ENCODE measurements at regions of chr12 and their contacts with region 1.

Region 1: DNA sequence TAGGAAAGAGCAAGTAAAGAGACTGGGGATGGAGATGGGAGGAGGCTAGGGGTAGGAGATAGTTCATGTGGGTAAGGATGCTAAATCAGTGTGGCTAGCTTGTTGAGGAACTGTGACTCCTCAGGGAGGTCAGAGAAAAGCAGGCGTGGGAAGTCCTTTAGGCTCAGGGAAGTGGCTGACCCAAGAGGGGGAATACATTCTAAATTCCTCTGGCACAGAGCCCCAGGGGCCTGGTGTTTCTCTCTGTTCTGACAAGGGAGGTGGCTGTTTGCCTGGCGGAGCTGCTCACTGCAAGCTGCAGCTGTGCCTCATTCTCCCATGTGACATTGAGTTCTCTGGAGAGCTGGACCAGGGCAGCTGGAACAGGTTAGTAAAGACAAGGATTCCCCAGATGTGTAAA is 152.2 kb upstream of the SLC38A2 start:
- DNase-seq: peak; percentile 28 to 85
- H3K4me3 ChIP-seq: no peak overlapping the region
- H3K27ac ChIP-seq: peak overlapping the region; percentile 56 to 58
- H3K4me1 ChIP-seq: peaks cover 0 to 11% of the 10 kb centered on the region in 2 donors
- H3K27me3 ChIP-seq: no peaks in the 10 kb centered on the region
- CTCF ChIP-seq: no peak

Region 2: GRCh38 chr12:46357438-46358324 is 167.1 kb before region 1 on chr12:
- intact Hi-C with region 1: no loop called
- DNase-seq: no peak
- H3K4me3 ChIP-seq: no peak overlapping the region
- H3K27ac ChIP-seq: peak overlapping the region in 1 of 2 donors; percentile 40
- H3K4me1 ChIP-seq: peaks cover 0 to 9% of the 10 kb centered on the region in 2 donors
- H3K27me3 ChIP-seq: no peaks in the 10 kb centered on the region
- CTCF ChIP-seq: no peak

Region 3: GRCh38 chr12:46546634-46547286 is 22.0 kb after region 1 on chr12:
- intact Hi-C with region 1: loop called (anchors 1 kb)
- DNase-seq: no peak
- H3K4me3 ChIP-seq: no peak overlapping the region
- H3K27ac ChIP-seq: no peak overlapping the region
- H3K4me1 ChIP-seq: peaks cover 0 to 4% of the 10 kb centered on the region in 2 donors
- H3K27me3 ChIP-seq: no peaks in the 10 kb centered on the region
- CTCF ChIP-seq: no peak

Region 4: DNA sequence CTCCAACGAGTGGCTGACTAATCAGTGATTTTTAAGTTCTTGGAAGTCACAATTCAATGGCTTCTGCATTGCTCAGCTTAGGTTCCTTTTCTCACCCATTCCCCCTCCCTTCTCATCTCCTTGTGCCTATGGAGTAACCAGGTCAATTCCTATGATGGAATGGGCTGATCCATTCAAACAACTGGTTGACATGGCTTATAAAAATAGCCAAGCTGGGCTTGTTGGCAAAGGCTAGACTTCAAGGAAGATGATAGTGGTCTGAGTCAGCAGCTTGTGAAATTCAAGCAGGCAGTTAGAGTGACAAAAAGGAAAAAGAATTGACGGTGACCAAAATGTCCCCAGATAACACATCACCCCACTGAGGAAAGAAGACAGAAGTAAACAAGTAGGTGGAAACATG is 434.7 kb after region 1 on chr12:
- intact Hi-C with region 1: no loop called
- DNase-seq: no peak
- H3K4me3 ChIP-seq: no peak overlapping the region
- H3K27ac ChIP-seq: no peak overlapping the region
- H3K4me1 ChIP-seq: peaks cover 0 to under 1% of the 10 kb centered on the region in 2 donors
- H3K27me3 ChIP-seq: no peaks in the 10 kb centered on the region
- CTCF ChIP-seq: no peak

Measured in ascending aorta (tissue), 2 donors.